Sciatic nerve (tissue), 2 donors: ENCODE measurements at regions of chr13 and their contacts with region 1.

Region 1: DNA sequence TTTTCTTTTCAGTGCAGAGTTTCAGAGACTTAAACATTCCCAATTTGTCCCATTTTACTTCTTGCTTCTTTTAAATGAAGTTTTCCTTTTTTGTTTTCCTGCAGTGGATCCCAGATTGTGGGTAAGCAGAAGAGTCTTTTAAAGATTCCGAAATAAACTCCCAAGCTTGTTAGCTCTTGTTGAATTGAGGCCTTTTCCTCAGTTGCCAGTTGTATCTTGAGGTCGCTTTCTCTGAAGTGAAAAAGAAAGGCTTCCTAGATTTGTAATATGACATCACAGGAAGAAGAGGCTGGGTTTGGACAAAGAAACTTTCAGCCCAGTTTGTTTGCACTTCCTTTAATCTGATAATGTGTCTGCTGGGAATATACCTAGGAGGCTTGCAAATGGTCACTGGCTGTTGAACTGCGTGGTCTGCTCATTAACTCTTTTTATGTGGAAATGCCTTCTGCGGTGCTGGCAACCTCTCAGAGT is at the start of gene LPAR6:
- DNase-seq: no peak
- ATAC-seq: peak; percentile 92
- total RNA-seq, gene LPAR6: 55.0 TPM

Region 2: GRCh38 chr13:46874006-46874405 is 1538.9 kb before region 1 on chr13:
- intact Hi-C with region 1: loop called (anchors 5 kb)
- DNase-seq: no peak
- ATAC-seq: no peak

Region 3: GRCh38 chr13:49132479-49133002 is 719.6 kb after region 1 on chr13:
- intact Hi-C with region 1: no loop called
- DNase-seq: no peak
- ATAC-seq: no peak